Ovary (tissue), 10 donors: ENCODE measurements at regions of chr17 and their contacts with region 1.

Region 1: GRCh38 chr17:80981062-80981902 is 10.4 kb upstream of the CHMP6 start:
- DNase-seq: peak in 2 of 5 donors; percentile 31 to 63
- H3K4me3 ChIP-seq: no peak overlapping the region
- H3K27ac ChIP-seq: no peak overlapping the region
- H3K4me1 ChIP-seq: no peaks in the 10 kb centered on the region
- H3K27me3 ChIP-seq: no peaks in the 10 kb centered on the region
- CTCF ChIP-seq: peak; percentile 78 to 92 (median 88)
- EP300 ChIP-seq: no peak
- POLR2A ChIP-seq: no peak

Region 2: GRCh38 chr17:80477647-80478478 is 503.4 kb before region 1 on chr17:
- intact Hi-C with region 1: loop called in 1 of 4 experiments (anchors 5 kb)
- DNase-seq: peak; percentile 39 to 77 (median 60)
- H3K4me3 ChIP-seq: no peak overlapping the region
- H3K27ac ChIP-seq: no peak overlapping the region
- H3K4me1 ChIP-seq: peaks cover 3% of the 10 kb centered on the region
- H3K27me3 ChIP-seq: peaks cover 23% of the 10 kb centered on the region
- CTCF ChIP-seq: peak; percentile 10 to 59 (median 38)
- EP300 ChIP-seq: no peak
- POLR2A ChIP-seq: no peak

Region 3: DNA sequence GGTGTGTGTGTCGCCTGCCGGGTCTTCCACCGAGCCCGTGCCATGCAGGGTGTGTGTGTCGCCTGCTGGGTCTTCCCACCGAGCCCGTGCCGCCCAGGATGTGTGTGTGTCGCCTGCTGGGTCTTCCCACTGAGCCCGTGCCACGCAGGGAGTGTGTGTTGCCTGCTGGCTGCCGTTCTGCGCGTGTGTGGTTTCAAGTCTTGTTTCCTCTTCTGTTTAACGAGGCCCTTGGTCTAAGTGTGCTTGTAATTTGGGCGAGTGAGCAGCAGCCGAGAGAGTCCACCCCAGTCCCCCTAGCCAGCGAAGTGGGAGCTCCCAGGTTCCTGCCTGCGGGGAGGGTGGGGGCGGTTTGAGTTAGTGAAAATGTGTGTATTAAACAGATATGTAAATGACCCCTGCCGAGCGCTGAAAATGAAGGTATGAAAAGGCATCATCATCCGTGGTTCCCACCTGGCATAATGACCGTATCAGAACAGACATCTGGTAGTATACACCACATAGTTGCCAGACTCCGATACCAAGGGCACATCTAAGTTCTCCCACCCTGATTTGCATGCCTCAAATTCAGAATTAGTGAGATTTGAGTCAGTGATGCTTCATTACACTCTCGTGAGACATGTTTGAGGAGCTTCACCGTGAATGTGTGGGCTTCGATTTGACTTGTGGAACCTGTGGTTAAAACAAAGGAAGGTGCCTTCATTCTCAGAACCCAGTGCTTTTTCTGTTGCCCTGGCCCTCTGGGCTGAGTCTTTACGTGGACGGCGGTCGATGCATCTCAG is 104.1 kb before region 1 on chr17:
- intact Hi-C with region 1: loop called in 1 of 4 experiments (anchors 10 kb)
- DNase-seq: peak in 1 of 5 donors; percentile 17
- H3K4me3 ChIP-seq: no peak overlapping the region
- H3K27ac ChIP-seq: no peak overlapping the region
- H3K4me1 ChIP-seq: no peaks in the 10 kb centered on the region
- H3K27me3 ChIP-seq: no peaks in the 10 kb centered on the region
- CTCF ChIP-seq: no peak
- EP300 ChIP-seq: no peak
- POLR2A ChIP-seq: no peak